SK-N-SH (cell line): ENCODE measurements at regions of chr11 and their contacts with region 1.

Region 1: DNA sequence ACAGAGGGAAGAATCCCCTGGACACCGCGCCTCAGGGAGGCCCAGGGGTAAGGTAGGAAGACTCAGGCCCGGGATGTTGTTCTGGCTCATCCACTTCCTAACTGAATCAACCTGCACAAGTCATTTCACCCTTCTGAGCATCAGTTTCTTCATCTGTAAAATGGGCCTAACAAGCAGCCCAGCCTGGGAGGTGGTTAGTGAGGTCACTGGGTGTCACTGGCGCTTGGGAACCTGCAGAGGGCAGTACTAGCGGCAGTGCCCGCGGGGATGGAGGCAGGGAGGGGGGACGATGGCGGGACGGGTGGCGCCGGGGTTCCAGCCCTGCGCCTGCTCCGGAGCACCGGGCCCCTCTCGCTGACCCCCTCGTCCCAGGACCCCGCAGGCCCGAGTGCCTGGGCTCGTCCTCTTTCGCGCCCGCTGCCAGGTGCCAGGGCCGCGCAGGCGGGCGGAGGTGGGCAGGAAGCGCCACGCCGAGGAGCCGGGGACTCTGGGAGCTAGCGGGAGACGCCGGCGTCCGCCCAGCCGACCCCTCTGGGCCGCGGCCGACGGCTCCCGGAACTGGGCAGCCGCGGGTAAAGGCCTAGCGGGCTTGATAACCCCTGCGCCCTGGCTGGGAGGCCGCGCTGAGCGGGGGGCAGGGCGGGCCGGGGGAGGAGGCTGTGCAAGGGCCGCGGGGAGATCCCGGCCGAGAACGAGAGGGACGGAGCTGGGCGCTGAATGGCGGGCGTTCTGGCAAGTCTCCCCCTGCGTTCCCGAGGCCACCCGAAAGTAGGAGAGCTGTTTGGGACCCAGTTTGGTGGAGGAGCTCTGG is at the start of gene NLRX1:
- DNase-seq: peak; percentile 98
- H3K4me3 ChIP-seq: peak within 1 kb of the TSS; percentile 61 to 76
- H3K27ac ChIP-seq: peak within 1 kb of the TSS; percentile 55 to 74
- H3K4me1 ChIP-seq: peaks cover 5 to 8% of the 10 kb centered on the region in 2 experiments; a peak in 2 of 4 replicates
- H3K27me3 ChIP-seq: no peaks in the 10 kb centered on the region
- CTCF ChIP-seq: peak; percentile 82
- EP300 ChIP-seq: no peak
- RAD21 ChIP-seq: peak; percentile 51; the same call in 1 of the 2 replicates
- polyA plus RNA-seq, gene NLRX1: 13.7 and 13.8 TPM in 2 replicates

Region 2: DNA sequence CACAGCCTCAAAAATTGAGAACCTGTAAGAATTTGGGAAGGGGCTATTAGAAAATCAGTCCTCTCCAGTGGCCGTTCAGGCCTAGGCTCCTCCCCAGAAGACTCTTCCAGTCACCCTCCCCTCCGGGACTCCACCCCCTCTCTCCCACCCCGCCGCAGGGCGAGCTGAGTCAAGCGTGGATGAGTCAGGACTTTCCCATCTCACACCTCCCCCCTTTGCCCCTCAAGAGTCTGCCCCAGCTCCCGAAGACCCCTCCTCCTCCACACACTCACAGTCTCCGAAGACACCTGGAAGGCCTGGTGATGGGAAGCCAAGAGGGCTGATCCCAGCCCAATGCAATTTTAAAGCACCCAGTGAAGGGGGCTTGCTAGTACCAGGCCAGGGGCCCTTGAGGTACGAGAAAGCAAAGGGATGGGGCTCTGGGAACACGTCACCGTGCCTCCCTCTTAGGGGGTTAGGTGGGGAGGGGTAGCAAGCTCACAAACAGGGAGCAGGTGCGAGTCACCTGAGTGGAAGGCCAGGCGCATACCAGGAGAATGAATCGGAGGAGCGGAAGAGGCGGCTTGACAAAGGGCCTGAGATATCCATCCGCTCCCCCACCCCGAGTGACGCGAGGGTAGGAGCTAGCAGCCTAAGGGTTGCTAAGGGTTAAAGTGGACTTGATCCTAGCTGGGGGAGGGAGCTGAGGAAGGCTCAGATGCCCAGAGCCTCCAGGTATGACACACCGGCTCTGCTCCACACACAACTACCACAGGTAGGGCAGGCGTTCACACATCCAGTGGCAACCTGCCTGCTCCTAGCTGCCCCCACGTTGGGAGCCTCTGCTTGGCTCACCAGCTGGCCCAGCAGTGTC is 256.6 kb before region 1 on chr11:
- CTCF ChIA-PET with region 1: no interaction called
- POLR2A ChIA-PET with region 1: no interaction called
- DNase-seq: no peak
- H3K4me3 ChIP-seq: peak overlapping the region in 1 of 2 experiments; percentile 4; a peak in 3 of 4 replicates
- H3K27ac ChIP-seq: peak overlapping the region; percentile 87 to 100
- H3K4me1 ChIP-seq: peaks cover 85 to 94% of the 10 kb centered on the region in 2 experiments
- H3K27me3 ChIP-seq: no peaks in the 10 kb centered on the region
- CTCF ChIP-seq: no peak
- EP300 ChIP-seq: peak in 1 of 2 experiments; percentile 77; a peak in 1 of 4 replicates
- RAD21 ChIP-seq: no peak

Region 3: DNA sequence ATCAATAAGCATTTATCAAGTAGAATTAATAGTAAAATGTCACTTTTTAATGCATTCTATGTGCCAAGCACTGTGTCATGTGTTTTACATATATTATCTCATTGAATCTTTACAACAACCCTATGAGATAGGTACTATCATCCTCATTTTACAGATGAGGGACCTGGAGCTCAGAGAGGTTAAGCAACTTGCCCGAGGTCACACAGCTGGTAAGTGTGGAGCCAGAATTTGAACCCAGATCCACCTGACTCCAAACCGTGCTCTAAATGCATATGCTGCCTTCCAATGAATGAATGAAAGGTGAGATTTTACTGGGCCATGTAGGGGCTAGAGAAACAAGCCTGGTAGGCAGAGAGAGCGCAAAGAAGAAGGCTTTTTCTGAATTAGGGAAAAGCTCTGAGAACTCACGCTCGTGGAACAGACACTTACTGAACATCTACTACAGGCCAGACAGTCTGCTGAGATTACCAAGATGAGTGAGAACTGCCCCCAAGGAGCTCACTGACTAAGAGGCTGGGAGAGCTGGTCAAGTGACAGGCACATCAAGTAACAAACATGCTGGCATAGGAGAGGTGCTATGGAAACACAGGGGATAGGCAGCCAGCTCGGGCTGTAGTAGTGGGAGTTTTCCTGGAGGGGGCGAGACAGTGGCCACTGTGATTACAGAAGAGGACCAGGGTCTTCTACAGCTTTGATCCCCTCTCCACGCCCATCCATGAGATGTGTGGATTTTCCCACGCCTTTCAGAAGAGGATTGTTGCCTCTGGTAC is 15.4 kb before region 1 on chr11:
- CTCF ChIA-PET with region 1: interaction called, 12 read pairs
- POLR2A ChIA-PET with region 1: no interaction called
- DNase-seq: no peak
- H3K4me3 ChIP-seq: no peak overlapping the region
- H3K27ac ChIP-seq: no peak overlapping the region
- H3K4me1 ChIP-seq: peaks cover 0 to 9% of the 10 kb centered on the region in 2 experiments; a peak in 1 of 4 replicates
- H3K27me3 ChIP-seq: no peaks in the 10 kb centered on the region
- CTCF ChIP-seq: peak; percentile 13; the same call in 1 of the 2 replicates
- EP300 ChIP-seq: no peak
- RAD21 ChIP-seq: no peak

Region 4: DNA sequence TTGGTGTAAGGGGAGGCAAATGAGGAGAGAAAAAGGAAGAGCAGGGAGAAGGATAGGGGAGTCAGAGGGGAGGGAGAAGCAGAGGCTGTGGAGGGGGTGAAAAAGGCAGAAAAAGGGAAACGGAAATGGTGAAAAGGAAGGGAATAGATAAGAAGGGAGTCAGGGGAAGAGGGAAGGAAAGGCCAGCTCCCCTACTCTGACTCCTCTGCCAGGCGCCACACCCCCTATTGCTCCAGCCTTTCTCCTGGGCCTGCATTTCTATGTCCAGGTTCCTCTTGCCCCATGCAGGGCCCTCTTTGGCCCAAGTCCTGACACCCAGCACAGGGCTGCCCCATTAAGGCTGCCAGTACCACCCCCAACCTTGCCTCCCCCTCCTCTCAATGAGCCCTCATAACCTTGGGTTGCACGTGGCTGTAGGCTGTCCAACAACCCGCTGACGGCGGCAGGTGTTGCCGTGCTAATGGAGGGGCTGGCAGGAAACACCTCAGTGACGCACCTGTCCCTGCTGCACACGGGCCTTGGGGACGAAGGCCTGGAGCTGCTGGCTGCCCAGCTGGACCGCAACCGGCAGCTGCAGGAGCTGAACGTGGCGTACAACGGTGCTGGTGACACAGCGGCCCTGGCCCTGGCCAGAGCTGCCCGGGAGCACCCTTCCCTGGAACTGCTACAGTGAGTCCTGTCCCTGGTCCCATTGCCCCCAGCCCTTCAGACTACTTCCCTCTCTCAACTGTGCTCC is 13.2 kb after region 1 on chr11:
- CTCF ChIA-PET with region 1: interaction called, 12 read pairs
- POLR2A ChIA-PET with region 1: no interaction called
- DNase-seq: no peak
- H3K4me3 ChIP-seq: no peak overlapping the region
- H3K27ac ChIP-seq: no peak overlapping the region
- H3K4me1 ChIP-seq: peaks cover 0 to 9% of the 10 kb centered on the region in 2 experiments; a peak in 1 of 4 replicates
- H3K27me3 ChIP-seq: no peaks in the 10 kb centered on the region
- CTCF ChIP-seq: no peak
- EP300 ChIP-seq: no peak
- RAD21 ChIP-seq: no peak

Region 5: GRCh38 chr11:119189412-119189811 is 20.7 kb after region 1 on chr11:
- CTCF ChIA-PET with region 1: interaction called, 32 read pairs
- POLR2A ChIA-PET with region 1: no interaction called
- DNase-seq: peak; percentile 6
- H3K4me3 ChIP-seq: no peak overlapping the region
- H3K27ac ChIP-seq: no peak overlapping the region
- H3K4me1 ChIP-seq: peaks cover 0 to 9% of the 10 kb centered on the region in 2 experiments; a peak in 1 of 4 replicates
- H3K27me3 ChIP-seq: no peaks in the 10 kb centered on the region
- CTCF ChIP-seq: no peak
- EP300 ChIP-seq: no peak
- RAD21 ChIP-seq: no peak